Mammary epithelial cell (primary cell): ENCODE measurements at regions of chr19 and their contacts with region 1.

Region 1: DNA sequence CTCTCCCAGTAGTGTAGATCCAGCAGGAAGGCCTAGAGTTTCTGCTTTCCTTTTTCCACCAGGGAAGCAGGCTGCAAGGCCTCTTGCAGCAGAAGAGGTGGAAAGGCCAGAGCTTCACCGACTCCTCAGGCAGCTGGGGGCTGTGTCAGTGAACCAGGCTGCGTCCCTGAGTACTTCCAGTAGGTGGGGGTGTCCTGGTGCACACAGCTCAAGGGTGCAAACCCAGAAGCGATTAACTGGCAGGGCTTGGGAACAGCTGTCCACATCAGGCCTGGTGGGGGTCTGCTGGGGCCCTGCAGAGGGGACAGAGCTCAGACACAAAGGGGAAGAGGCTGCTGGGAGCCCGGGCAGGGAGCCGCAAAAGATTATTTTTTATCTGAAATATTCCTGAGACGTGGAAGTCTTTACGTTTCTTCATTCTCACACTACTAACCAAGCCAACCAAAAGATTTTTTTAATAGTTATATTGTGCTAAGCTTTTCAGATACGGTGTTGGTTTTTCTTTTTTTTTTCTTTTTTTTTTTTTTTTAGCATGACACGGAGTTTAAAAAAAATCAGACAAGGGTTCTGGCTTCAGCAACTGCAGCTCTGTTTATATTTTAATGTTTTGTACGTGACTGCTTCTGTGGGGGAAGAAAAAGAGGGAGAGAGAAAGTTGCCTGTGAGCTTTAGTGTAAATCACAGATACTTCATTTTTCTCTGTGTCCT is 11.0 kb downstream of the TSHZ3 start:
- DNase-seq: no peak
- H3K4me3 ChIP-seq: no peak overlapping the region
- H3K27ac ChIP-seq: no peak overlapping the region
- H3K4me1 ChIP-seq: peaks cover 45% of the 10 kb centered on the region
- H3K27me3 ChIP-seq: no peaks in the 10 kb centered on the region
- CTCF ChIP-seq: peak; percentile 40 to 48

Region 2: GRCh38 chr19:31312009-31312676 is 26.1 kb before region 1 on chr19:
- CTCF ChIA-PET with region 1: no interaction called
- dilution Hi-C with region 1: no loop called
- in situ Hi-C with region 1: no loop called
- intact Hi-C with region 1: no loop called
- DNase-seq: peak; percentile 29
- H3K4me3 ChIP-seq: no peak overlapping the region
- H3K27ac ChIP-seq: no peak overlapping the region
- H3K4me1 ChIP-seq: no peaks in the 10 kb centered on the region
- H3K27me3 ChIP-seq: no peaks in the 10 kb centered on the region
- CTCF ChIP-seq: no peak

Region 3: DNA sequence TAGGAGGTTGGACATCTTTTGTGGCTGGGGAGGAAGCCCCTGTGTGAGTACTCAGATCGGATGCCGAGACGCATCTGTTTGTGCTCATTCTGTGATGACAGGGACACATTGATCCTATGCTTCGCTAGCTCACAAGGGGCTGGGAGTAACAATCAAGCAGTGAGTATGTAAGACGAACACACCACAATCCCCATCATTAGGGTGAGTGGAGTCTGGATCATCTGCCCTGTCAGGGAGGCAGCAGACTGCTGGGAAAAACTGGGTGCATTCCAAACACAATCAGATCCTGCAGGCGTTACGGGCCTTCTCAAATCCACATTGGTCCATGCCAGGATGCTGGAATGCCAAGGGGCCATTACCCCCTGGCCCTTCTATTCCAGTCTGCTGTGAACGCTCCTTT is 75.1 kb after region 1 on chr19:
- CTCF ChIA-PET with region 1: no interaction called
- dilution Hi-C with region 1: loop called (anchors 5 kb)
- in situ Hi-C with region 1: no loop called
- intact Hi-C with region 1: no loop called
- DNase-seq: no peak
- H3K4me3 ChIP-seq: no peak overlapping the region
- H3K27ac ChIP-seq: no peak overlapping the region
- H3K4me1 ChIP-seq: peaks cover 21% of the 10 kb centered on the region
- H3K27me3 ChIP-seq: no peaks in the 10 kb centered on the region
- CTCF ChIP-seq: no peak